RWPE1 (cell line): ENCODE measurements at regions of chr14 and their contacts with region 1.

Region 1: DNA sequence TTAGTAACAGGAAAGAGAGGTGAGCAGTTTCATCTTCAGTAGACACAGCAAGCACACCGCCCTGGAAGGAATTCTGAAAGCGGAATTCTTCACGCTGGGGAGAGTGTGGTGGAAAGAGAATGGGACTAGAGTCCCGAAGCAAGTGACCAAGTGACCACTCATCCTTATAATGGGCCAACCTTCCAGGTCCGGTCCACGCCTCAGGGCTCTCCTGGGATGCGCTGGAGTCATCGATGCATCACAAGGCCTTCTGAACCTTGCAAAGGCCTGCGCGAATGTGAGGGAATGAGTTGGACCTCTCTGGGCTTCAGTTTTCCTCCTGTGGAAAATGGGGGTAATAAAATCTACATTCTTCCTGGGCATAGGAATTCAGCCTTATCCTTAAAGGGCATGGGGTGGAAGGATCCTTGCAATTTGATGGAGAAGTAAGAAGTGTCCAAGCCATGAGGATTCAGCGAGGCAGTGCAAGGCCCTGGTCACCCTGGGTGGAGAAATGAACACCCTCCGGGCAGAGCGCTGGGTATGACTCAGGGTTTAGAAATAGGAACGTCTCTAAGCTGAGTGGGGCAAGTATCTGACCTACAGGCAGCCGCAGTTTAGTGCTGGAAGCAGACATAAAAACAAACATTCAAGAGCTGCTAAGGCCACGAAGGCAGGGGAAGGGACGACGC is 97.7 kb downstream of the SETD3 start:
- DNase-seq: peak; percentile 82
- H3K27ac ChIP-seq: no peak overlapping the region
- CTCF ChIP-seq: no peak

Region 2: DNA sequence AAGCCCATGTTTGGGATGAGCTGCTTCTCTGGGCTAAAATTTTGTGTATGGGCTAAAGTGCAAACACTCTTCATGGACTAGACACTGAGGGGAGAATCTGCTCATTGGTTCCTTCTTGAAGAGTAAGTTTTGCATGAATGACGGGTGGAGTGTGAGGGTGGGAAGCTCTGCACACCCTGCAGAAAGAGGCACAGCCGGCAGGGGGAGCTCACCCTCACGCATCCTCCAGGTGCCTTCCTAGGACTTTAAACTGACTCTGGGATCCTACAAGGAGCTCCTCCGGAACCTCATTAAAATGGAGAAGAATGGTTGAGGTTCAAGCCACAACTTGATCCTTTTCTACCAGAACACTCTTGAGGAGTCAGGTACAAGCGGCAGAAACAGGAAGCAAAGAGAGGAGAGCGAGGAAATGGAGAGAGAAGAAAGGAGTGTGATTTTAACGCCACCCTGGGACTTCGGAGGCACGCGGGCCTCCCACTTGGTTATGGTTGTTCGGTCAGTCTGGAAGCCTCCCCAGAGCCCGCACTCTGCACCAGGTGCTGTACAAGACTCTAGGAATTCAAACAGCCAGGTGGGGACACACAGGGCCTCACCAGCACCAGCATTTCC is 10.2 kb after region 1 on chr14:
- CTCF ChIA-PET with region 1: interaction called, 11 read pairs
- POLR2A ChIA-PET with region 1: no interaction called
- DNase-seq: peak; percentile 51
- H3K27ac ChIP-seq: no peak overlapping the region
- CTCF ChIP-seq: peak; percentile 62